Astrocyte of the cerebellum (primary cell): ENCODE measurements at regions of chr1 and their contacts with region 1.

Region 1: GRCh38 chr1:178513278-178514022 is 541 bp downstream of the TEX35 start:
- DNase-seq: no peak
- H3K4me3 ChIP-seq: no peak overlapping the region
- CTCF ChIP-seq: no peak

Region 2: GRCh38 chr1:178451529-178451928 is 61.9 kb before region 1 on chr1:
- in situ Hi-C with region 1: loop called (anchors 10 kb)
- DNase-seq: no peak
- H3K4me3 ChIP-seq: no peak overlapping the region
- CTCF ChIP-seq: no peak

Region 3: DNA sequence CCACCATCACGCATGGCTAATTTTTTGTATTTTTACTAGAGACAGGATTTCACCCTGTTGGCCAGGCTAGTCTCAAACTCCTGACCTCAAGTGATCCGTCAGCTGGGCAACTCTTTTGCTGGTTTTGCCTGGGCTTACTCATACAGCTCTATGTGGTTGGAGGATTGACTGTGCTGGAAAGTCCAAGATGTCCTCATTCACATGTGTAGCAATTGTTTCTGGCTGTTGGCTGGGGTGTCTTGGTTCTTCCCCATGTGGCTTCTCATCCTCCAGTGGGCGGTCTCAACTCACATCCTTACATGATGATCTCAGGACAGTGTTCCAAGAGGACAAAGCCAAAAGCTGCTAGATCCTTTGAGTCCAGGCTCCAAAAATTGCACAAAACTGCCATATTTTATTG is 52.7 kb after region 1 on chr1:
- in situ Hi-C with region 1: no loop called
- DNase-seq: no peak
- H3K4me3 ChIP-seq: no peak overlapping the region
- CTCF ChIP-seq: no peak